ENCODE measurements at regions of chr19 and their contacts with region 1.

Region 1: DNA sequence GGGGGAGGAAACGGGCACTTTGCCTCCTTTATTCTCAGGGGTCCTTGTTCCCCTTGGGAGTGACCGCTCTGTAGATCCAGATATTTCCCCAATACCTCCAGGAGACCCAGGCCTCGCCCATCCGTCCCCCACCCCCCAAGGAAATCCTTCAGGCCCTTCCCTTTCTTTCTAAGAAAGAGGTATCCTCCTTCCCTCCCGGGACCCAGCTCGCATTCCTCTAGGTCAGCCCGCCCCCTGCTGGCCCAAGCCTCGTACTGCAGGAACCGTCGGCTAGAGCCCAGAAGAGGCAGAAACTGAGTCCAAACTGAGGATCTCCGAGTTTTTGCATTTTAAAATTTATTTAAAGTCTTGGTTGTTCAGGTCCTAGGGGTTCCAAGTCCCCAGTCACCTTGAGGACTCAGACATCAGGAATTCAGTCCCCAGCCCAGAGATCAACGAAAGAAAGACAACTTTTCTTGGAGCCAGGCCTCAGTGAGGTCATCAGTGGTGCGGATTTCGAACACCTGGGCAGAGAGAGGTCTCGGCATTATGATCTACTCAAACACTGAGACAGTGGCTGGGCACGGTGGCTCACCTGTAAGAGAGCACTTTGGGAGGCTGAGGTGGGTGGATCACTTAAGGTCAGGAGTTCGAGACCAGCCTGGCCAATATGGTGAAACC is 7.5 kb upstream of the LRFN1 start:
- DNase-seq: peak; percentile 83 to 97
- ATAC-seq: peak; percentile 74 to 83
- H3K4me3 ChIP-seq: no peak overlapping the region
- H3K27ac ChIP-seq: peak overlapping the region in 1 of 2 experiments; percentile 19; a peak in 2 of 6 replicates
- H3K4me1 ChIP-seq: peaks cover 10% of the 10 kb centered on the region; the same call in 1 of the 3 replicates
- CTCF ChIP-seq: peak; percentile 100
- EP300 ChIP-seq: no peak
- POLR2A ChIP-seq: no peak
- RAD21 ChIP-seq: peak; percentile 100

Region 2: DNA sequence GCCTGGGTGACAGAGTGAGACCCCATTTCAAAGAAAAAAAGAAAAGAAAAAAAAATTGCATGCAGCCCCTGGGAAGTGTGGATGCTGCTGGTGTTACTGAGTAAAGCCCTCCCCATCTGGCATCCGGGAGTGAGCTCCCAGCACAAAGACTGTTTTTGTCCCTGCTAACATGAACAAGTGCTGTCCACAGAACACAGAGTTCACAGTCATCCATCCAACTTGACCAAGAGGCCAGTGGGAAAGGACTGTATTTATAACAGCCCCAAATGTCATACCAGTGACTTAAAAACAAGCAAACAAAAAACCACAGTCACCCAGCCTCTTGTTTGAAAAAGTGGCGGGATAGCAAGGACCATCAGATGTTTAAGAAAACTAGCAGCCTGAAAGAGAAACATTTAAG is 363.4 kb before region 1 on chr19:
- CTCF ChIA-PET with region 1: interaction called, 29 read pairs
- POLR2A ChIA-PET with region 1: interaction called, 3 read pairs
- DNase-seq: no peak
- ATAC-seq: no peak
- H3K4me3 ChIP-seq: no peak overlapping the region
- H3K27ac ChIP-seq: no peak overlapping the region
- H3K4me1 ChIP-seq: peaks cover 21% of the 10 kb centered on the region
- CTCF ChIP-seq: no peak
- EP300 ChIP-seq: no peak
- POLR2A ChIP-seq: no peak
- RAD21 ChIP-seq: no peak

Region 3: DNA sequence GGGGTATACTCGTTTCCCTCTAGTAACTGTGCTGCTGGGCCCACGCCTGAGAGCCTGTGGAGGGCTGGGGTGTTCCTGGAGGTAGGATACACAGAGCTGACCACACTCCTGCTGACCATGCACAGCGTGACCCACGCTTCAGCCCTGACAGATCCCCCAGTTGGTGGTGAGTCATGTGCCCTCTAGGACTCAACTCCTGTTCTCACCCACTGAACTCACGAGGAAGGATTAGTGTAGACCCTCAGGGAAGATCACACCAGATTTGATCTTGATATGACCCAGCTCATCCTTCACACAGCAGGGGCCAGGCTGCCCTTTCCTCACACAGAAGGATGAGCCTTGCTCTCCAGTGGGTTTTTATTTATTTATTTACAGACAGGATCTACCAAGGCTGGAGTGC is 257.3 kb before region 1 on chr19:
- CTCF ChIA-PET with region 1: interaction called, 10 read pairs
- POLR2A ChIA-PET with region 1: no interaction called
- DNase-seq: peak in 1 of 2 experiments; percentile 64
- ATAC-seq: peak; percentile 26 to 45; a peak in 4 of 6 replicates
- H3K4me3 ChIP-seq: no peak overlapping the region
- H3K27ac ChIP-seq: peak overlapping the region; percentile 60 to 72; a peak in 5 of 6 replicates
- H3K4me1 ChIP-seq: peaks cover 40% of the 10 kb centered on the region
- CTCF ChIP-seq: no peak
- EP300 ChIP-seq: peak in 1 of 2 experiments; percentile 48; a peak in 2 of 5 replicates
- POLR2A ChIP-seq: no peak
- RAD21 ChIP-seq: no peak

Region 4: GRCh38 chr19:39166571-39167391 is 161.4 kb before region 1 on chr19:
- CTCF ChIA-PET with region 1: interaction called, 10 read pairs
- POLR2A ChIA-PET with region 1: no interaction called
- DNase-seq: no peak
- ATAC-seq: peak; percentile 17 to 37; a peak in 4 of 6 replicates
- H3K4me3 ChIP-seq: no peak overlapping the region
- H3K27ac ChIP-seq: peak overlapping the region in 1 of 2 experiments; percentile 22; a peak in 2 of 6 replicates
- H3K4me1 ChIP-seq: peaks cover 15% of the 10 kb centered on the region
- CTCF ChIP-seq: no peak
- EP300 ChIP-seq: no peak
- POLR2A ChIP-seq: no peak
- RAD21 ChIP-seq: no peak

Region 5: DNA sequence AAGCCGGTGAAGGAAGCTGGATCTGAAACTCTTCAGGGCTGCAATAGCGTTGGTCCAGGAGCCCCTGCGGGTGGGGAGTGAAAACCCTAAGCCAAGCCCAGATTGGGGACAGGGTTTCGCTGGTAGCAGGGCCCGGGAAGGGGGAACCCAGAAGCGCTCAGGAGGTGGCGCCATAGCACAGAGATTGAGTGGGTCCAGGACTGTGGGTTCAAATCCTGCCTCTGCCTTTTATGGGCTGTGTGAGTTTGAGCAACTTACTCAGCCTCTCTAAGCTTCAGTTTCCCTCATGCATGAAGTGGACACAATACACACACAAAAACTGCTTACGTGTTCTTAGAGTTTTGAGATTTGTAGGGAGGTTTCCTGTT is 115.8 kb before region 1 on chr19:
- CTCF ChIA-PET with region 1: interaction called, 78 read pairs
- POLR2A ChIA-PET with region 1: no interaction called
- DNase-seq: peak in 1 of 2 experiments; percentile 76
- ATAC-seq: peak; percentile 90
- H3K4me3 ChIP-seq: no peak overlapping the region
- H3K27ac ChIP-seq: no peak overlapping the region
- H3K4me1 ChIP-seq: no peaks in the 10 kb centered on the region
- CTCF ChIP-seq: peak; percentile 84
- EP300 ChIP-seq: no peak
- POLR2A ChIP-seq: no peak
- RAD21 ChIP-seq: peak; percentile 93 to 98

Region 6: DNA sequence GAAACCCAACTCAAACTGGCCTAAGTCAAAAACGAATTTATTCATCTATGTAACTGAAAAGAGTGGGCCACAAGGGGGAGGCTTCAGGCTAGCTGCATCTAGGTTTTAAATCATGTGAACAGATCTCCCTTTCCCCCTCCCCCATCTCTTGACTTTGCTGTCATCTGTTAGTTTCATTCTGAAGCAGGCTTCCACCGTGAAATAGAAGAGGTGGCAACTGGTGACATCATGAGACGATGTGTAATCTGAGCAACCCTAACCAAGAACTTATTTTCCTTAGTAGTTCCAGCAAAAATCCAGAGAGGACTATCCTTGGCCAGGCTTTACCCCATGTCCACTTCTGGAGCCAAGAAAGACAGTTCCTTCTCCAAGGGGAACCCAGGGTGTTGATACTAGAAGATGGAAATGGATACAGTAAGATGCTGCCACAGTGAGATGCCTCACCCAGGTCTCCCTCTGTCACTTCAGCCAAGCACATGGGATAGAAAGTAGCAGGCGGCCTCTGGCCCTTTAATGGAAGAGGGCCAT is 23.4 kb after region 1 on chr19:
- CTCF ChIA-PET with region 1: interaction called, 21 read pairs
- POLR2A ChIA-PET with region 1: no interaction called
- DNase-seq: peak in 1 of 2 experiments; percentile 42
- ATAC-seq: no peak
- H3K4me3 ChIP-seq: no peak overlapping the region
- H3K27ac ChIP-seq: no peak overlapping the region
- H3K4me1 ChIP-seq: peaks cover 6% of the 10 kb centered on the region; the same call in 1 of the 3 replicates
- CTCF ChIP-seq: no peak
- EP300 ChIP-seq: 0 out of 5 replicates have a peak, but pooled peaks of 1 of the 2 experiments have one; percentile 18
- POLR2A ChIP-seq: no peak
- RAD21 ChIP-seq: no peak

Measured in A549 (cell line).